ENCODE measurements at regions of chr1 and their contacts with region 1.

Region 1: GRCh38 chr1:27154991-27155781 is at the start of gene SLC9A1:
- DNase-seq: peak; percentile 91 to 96 (median 94)
- ATAC-seq: peak; percentile 91 to 94
- H3K4me3 Mint-ChIP-seq: peak within 1 kb of the TSS; percentile 81 to 94 (median 90)
- H3K27ac Mint-ChIP-seq: peak within 1 kb of the TSS; percentile 97 to 100 (median 99)
- H3K4me1 Mint-ChIP-seq: peaks cover 32 to 53% (median 51%) of the 10 kb centered on the region in 4 donors
- H3K27me3 Mint-ChIP-seq: no peaks in the 10 kb centered on the region
- polyA plus RNA-seq, gene SLC9A1: 4.5 to 14.2 (median 8.5) TPM

Region 2: DNA sequence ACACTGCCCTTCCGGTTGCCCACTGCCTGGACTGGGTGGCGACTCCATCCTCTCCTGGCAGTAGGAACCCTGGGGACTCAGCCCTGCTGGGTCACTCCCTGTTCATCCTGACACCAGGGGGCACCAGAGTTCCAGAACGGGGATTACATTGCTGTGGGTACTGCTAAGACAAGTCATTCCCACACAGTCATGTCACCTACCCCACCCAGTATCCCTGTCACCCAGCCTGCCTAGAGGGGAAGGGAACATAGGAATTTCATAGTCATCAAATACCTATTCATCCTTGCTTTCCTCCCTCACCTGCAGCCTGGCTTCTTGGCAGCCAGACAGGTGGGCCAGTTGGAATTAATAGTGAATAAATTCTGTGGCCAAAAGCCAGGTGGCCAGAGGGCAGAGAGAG is 302.0 kb before region 1 on chr1:
- POLR2A ChIA-PET with region 1: no interaction called
- DNase-seq: peak; percentile 62 to 91 (median 76)
- ATAC-seq: peak; percentile 94 to 97
- H3K4me3 Mint-ChIP-seq: peak overlapping the region in 1 of 10 donors; percentile 5
- H3K27ac Mint-ChIP-seq: peak overlapping the region in 2 of 10 donors; percentile 12 to 20
- H3K4me1 Mint-ChIP-seq: peaks cover 0 to 2% (median 0%) of the 10 kb centered on the region in 4 donors
- H3K27me3 Mint-ChIP-seq: no peaks in the 10 kb centered on the region

Region 3: DNA sequence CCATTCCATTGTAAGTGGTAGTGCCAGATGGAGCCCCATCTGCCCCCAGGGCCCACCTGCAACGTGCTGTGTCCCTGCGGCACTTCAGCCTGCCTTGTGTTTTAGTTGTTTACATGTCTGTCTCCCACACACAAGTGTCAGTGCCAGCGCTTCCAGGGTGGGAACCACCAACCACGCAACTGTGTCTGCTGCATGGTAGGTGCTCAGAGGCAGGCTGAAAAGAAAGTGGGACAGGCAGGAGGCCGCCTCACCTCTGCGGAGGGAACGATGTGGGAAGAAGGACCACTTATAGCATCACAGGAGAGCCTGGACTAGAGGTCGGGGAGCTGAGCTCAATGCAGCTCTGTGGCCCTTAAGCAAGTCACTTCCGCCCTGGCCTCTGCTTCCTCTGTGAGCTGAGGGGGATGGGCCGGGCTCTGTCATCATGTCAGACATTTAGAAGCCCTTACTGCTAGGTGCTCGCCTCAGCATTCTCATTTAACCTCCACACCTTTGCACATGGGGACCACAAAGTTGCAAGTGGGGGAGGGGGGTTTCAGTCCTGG is 18.1 kb before region 1 on chr1:
- POLR2A ChIA-PET with region 1: interaction called, 199 read pairs
- DNase-seq: peak; percentile 47 to 90 (median 74)
- ATAC-seq: peak; percentile 94 to 95
- H3K4me3 Mint-ChIP-seq: peak overlapping the region; percentile 85 to 93 (median 89)
- H3K27ac Mint-ChIP-seq: peak overlapping the region; percentile 98 to 100 (median 100)
- H3K4me1 Mint-ChIP-seq: peaks cover 29 to 65% (median 61%) of the 10 kb centered on the region in 4 donors
- H3K27me3 Mint-ChIP-seq: no peaks in the 10 kb centered on the region